ENCODE measurements at regions of chr6 and their contacts with region 1.

Region 1: DNA sequence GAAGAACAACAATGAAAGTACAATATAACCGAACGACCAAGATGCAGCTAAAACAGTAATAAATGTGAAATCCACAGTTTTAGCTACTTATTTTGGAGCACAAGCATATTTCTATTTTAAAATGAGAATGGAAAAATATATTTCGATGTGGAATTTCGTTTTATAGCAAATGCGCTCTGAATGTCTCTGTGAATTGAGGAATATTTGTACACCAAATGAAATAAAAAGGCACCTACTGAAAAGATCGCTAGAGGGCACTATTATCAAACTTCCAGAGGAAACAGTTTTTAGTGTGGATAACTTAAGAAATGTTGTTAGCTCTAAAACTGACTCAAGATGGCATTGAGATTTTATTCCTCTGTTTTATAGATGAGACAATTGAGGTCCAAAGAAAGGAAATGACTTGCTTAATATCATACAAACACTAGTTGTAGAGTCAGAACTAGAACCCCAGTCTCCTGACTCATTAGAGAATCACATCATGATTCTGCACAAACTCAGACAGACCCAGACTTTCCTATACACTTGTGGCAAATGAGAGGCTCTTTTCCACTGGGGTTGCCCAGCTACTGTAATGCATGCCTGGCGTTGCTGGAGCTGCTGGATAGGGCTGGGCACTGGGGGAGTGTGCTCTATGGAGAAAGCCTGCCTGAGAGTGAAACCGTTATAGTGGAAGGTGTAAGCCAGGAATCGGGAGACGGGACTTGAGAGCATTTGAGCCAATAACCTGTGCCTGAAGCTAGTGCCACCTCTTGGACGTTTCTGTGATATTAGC is 51.9 kb downstream of the GCLC start:
- DNase-seq: peak; percentile 73
- ATAC-seq: peak; percentile 5
- H3K4me3 ChIP-seq: peak overlapping the region; percentile 0; the same call in 1 of the 2 replicates
- H3K27ac ChIP-seq: peak overlapping the region; percentile 55
- H3K4me1 ChIP-seq: peaks cover 18% of the 10 kb centered on the region
- H3K27me3 ChIP-seq: no peaks in the 10 kb centered on the region
- CTCF ChIP-seq: peak; percentile 89
- POLR2A ChIP-seq: no peak
- RAD21 ChIP-seq: peak; percentile 78

Region 2: GRCh38 chr6:52964318-52964717 is 528.7 kb before region 1 on chr6:
- CTCF ChIA-PET with region 1: no interaction called
- POLR2A ChIA-PET with region 1: no interaction called
- dilution Hi-C with region 1: no loop called
- in situ Hi-C with region 1: no loop called
- intact Hi-C with region 1: no loop called
- DNase-seq: no peak
- ATAC-seq: no peak
- H3K4me3 ChIP-seq: no peak overlapping the region
- H3K27ac ChIP-seq: no peak overlapping the region
- H3K4me1 ChIP-seq: no peaks in the 10 kb centered on the region
- H3K27me3 ChIP-seq: peaks cover 14% of the 10 kb centered on the region
- CTCF ChIP-seq: no peak
- POLR2A ChIP-seq: no peak
- RAD21 ChIP-seq: no peak

Region 3: DNA sequence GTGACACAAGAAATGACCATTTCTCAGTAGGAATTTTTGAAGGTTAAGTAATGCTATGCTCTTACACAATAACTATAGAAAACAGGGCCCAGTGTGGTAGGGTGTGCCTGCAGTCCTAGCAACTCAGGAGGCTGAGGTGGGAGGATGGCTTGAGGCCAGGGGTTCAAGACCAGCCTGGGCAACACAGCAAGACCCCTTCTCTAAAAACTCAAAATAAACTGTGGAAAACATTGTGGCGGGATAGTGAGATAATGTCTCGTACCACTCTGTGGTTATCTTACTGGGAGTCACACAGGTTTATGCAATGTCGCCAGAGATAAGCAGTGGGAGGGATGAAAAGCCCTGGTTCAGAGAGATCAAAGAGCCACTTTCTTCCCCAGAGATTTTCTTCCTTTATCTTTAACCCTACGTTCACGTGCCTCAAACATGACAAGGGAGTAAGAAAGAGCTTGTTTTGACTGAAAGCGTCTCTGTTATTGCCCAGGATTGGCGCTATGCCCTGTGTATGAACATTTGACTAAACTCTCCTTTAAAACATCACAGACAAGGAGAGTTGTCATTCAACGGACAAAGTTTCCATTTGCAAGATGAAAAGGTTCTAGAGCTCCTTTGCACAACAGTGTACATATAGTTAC is 358.3 kb before region 1 on chr6:
- CTCF ChIA-PET with region 1: no interaction called
- POLR2A ChIA-PET with region 1: no interaction called
- dilution Hi-C with region 1: no loop called
- in situ Hi-C with region 1: no loop called
- intact Hi-C with region 1: no loop called
- DNase-seq: no peak
- ATAC-seq: peak; percentile 24; the same call in 1 of the 2 replicates
- H3K4me3 ChIP-seq: no peak overlapping the region
- H3K27ac ChIP-seq: no peak overlapping the region
- H3K4me1 ChIP-seq: no peaks in the 10 kb centered on the region
- H3K27me3 ChIP-seq: peaks cover 23% of the 10 kb centered on the region
- CTCF ChIP-seq: no peak
- POLR2A ChIP-seq: no peak
- RAD21 ChIP-seq: no peak

Region 4: GRCh38 chr6:53513519-53513966 is 20.5 kb after region 1 on chr6:
- CTCF ChIA-PET with region 1: interaction called, 11 read pairs
- POLR2A ChIA-PET with region 1: no interaction called
- dilution Hi-C with region 1: no loop called
- in situ Hi-C with region 1: no loop called
- intact Hi-C with region 1: no loop called
- DNase-seq: no peak
- ATAC-seq: peak; percentile 75
- H3K4me3 ChIP-seq: no peak overlapping the region
- H3K27ac ChIP-seq: peak overlapping the region; percentile 74; the same call in 1 of the 2 replicates
- H3K4me1 ChIP-seq: peaks cover 4% of the 10 kb centered on the region; the same call in 1 of the 2 replicates
- H3K27me3 ChIP-seq: no peaks in the 10 kb centered on the region
- CTCF ChIP-seq: peak; percentile 49
- POLR2A ChIP-seq: no peak
- RAD21 ChIP-seq: peak; percentile 61

Region 5: DNA sequence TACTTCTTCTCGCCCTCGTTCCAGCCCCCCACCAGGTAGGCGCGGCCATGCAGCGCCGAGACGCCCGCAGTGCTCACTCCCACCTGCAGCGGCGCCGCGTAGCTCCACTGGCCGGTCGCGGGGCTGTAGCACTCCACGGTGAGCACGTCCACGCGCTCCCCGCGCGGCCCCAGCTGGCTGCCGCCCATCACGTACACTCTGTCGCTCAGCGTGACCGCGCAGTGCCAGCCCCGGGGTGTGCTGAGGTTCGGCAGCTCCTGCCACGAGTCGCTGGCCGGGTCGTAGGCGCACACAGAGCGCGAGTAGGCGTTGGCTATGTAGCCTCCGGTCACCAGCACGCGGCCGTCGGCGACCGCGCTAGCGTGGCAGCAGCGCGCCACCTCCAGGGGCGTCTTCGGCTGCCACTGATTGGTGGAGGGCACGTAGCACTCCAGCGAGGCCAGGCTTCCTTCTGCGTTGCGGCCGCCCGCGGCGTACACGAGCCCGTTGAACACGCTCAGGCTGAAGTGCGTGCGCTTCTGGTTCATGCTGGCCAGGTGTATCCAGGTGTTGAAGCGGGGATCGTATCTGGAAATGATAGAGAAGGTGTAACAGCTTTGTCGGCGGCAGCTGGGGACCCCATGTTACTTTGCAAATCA is 158.8 kb after region 1 on chr6:
- CTCF ChIA-PET with region 1: interaction called, 15 read pairs
- POLR2A ChIA-PET with region 1: no interaction called
- dilution Hi-C with region 1: no loop called
- in situ Hi-C with region 1: loop called (anchors 5 kb)
- intact Hi-C with region 1: loop called (anchors 1 kb)
- DNase-seq: peak; percentile 44
- ATAC-seq: peak; percentile 89
- H3K4me3 ChIP-seq: peak overlapping the region; percentile 78
- H3K27ac ChIP-seq: no peak overlapping the region; the same call in 1 of the 2 replicates
- H3K4me1 ChIP-seq: peaks cover 1% of the 10 kb centered on the region; the same call in 1 of the 2 replicates
- H3K27me3 ChIP-seq: peaks cover 10% of the 10 kb centered on the region; the same call in 1 of the 2 replicates
- CTCF ChIP-seq: 0 out of 2 replicates have a peak, but pooled peaks have one; percentile 20
- POLR2A ChIP-seq: no peak
- RAD21 ChIP-seq: no peak

Region 6: GRCh38 chr6:53725791-53726431 is 232.9 kb after region 1 on chr6:
- CTCF ChIA-PET with region 1: interaction called, 24 read pairs
- POLR2A ChIA-PET with region 1: interaction called, 8 read pairs
- dilution Hi-C with region 1: no loop called
- in situ Hi-C with region 1: loop called (anchors 5 kb)
- intact Hi-C with region 1: loop called (anchors 1 kb)
- DNase-seq: peak; percentile 69
- ATAC-seq: peak; percentile 94
- H3K4me3 ChIP-seq: no peak overlapping the region
- H3K27ac ChIP-seq: no peak overlapping the region
- H3K4me1 ChIP-seq: peaks cover 3% of the 10 kb centered on the region; the same call in 1 of the 2 replicates
- H3K27me3 ChIP-seq: no peaks in the 10 kb centered on the region
- CTCF ChIP-seq: peak; percentile 95
- POLR2A ChIP-seq: no peak
- RAD21 ChIP-seq: peak; percentile 89

Region 7: GRCh38 chr6:53794720-53795253 is 301.7 kb after region 1 on chr6 and contains the start of gene LRRC1:
- CTCF ChIA-PET with region 1: no interaction called
- POLR2A ChIA-PET with region 1: no interaction called
- dilution Hi-C with region 1: no loop called
- in situ Hi-C with region 1: no loop called
- intact Hi-C with region 1: loop called (anchors 2 kb)
- DNase-seq: peak; percentile 88
- ATAC-seq: peak; percentile 87
- H3K4me3 ChIP-seq: peak within 1 kb of the TSS; percentile 82
- H3K27ac ChIP-seq: peak within 1 kb of the TSS; percentile 79
- H3K4me1 ChIP-seq: peaks cover 7% of the 10 kb centered on the region
- H3K27me3 ChIP-seq: no peaks in the 10 kb centered on the region
- CTCF ChIP-seq: no peak
- POLR2A ChIP-seq: peak; percentile 33; the same call in 1 of the 2 replicates
- RAD21 ChIP-seq: no peak
- total RNA-seq, gene LRRC1: 6.1 and 6.7 TPM in 2 replicates

Region 8: GRCh38 chr6:54074578-54075195 is 581.6 kb after region 1 on chr6:
- CTCF ChIA-PET with region 1: no interaction called
- POLR2A ChIA-PET with region 1: no interaction called
- dilution Hi-C with region 1: no loop called
- in situ Hi-C with region 1: no loop called
- intact Hi-C with region 1: no loop called
- DNase-seq: no peak
- ATAC-seq: peak; percentile 32; the same call in 1 of the 2 replicates
- H3K4me3 ChIP-seq: no peak overlapping the region
- H3K27ac ChIP-seq: no peak overlapping the region
- H3K4me1 ChIP-seq: peaks cover 5% of the 10 kb centered on the region; the same call in 1 of the 2 replicates
- H3K27me3 ChIP-seq: no peaks in the 10 kb centered on the region
- CTCF ChIP-seq: no peak
- POLR2A ChIP-seq: no peak
- RAD21 ChIP-seq: no peak

Measured in IMR-90 (cell line).